Caki2 (cell line): ENCODE measurements at regions of chr20 and their contacts with region 1.

Region 1: DNA sequence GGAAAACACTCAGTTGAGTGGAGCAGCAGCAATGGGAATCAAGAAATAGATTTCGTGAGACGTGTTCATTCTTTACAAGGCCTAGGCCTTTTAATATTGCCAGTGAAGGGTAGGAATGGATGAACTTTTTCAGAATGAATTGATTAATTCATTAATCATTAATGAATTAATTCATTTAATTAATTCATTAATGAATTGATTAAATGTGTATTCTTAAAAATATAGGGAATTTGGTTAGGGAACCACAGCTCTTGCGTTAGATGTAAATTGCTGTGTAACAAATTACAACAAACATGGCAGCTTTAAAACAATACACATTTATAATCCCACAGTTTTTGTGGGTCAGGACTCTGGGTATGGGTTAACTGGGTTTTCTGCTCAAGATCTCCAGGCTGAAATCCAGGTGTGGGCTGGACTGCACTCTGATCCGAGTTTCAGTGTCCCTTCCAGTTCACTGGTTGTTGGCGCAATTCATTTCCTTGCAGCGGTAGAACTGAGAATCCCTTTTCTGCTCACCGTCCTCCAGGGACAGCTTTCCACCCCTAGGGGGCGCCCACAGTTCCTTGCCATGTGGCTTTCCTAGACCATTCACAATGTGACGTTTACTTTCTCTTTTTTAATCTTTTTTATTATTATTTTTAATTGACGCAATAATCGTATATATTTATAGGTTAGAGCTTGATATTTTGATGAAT is 32.8 kb upstream of the BCAS1 start:
- DNase-seq: peak; percentile 72

Region 2: DNA sequence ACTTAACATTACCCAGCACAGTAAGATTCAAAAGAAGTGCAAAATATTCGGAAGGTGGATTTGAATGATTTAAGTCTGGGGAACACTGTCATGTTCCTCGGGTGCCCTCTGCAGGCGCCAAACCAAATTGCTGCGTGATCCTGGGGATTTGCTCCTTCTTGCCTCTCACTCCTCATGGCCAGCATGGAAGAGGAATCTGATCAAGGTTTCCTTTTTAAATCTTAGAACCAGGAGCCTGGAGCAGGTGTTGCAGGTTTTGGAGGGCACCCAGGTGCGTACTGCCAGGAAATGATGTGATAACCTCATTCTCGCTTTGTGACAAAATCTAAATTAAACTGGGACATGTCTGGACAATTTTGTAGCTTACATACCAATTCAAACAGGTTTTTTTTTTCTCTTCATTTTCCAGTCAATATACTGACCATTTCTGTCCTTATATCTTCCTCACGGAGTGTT is 96.5 kb after region 1 on chr20:
- in situ Hi-C with region 1: loop called (anchors 10 kb)
- DNase-seq: peak; percentile 76